ENCODE measurements at regions of chr15 and their contacts with region 1.

Region 1: DNA sequence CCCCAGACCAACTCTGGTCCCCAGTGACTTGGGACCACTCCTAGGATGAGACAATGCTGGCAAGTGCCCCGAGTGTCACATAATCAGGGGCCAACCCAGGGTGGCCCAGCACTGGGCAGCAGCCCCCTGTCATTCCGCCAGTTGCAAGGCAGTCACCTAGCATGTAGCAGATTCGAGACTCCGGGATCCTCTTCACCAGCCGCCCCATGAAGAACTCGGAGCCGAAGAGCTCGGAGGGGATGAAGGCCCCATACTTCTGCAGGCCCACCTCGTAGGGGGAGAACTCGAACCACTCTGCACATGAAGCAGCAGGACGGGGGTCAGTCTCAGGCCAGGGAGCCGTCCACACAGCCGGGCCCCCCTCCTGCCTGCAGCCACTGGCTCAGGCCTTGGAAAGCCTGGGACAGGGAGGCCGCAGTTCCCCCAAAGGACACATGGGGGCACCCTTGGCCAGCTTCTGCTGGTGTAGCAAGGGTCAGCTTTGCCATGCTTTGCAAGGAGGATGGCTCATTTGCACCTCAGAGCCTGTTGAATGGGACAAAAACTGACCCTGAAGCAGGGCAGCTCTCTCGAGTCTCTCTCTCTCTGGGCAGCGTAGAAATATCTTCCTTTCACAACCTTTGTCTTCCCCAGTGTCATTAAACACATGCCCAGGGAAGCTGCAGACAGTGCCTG is 17.0 kb upstream of the EHD4 start:
- DNase-seq: peak; percentile 34
- H3K4me3 ChIP-seq: no peak overlapping the region
- H3K27ac ChIP-seq: no peak overlapping the region
- H3K27me3 ChIP-seq: peaks cover 28% of the 10 kb centered on the region
- CTCF ChIP-seq: peak; percentile 97

Region 2: GRCh38 chr15:41713047-41713446 is 276.3 kb before region 1 on chr15:
- CTCF ChIA-PET with region 1: no interaction called
- POLR2A ChIA-PET with region 1: no interaction called
- DNase-seq: no peak
- H3K4me3 ChIP-seq: no peak overlapping the region
- H3K27ac ChIP-seq: no peak overlapping the region
- H3K27me3 ChIP-seq: no peaks in the 10 kb centered on the region
- CTCF ChIP-seq: no peak

Region 3: DNA sequence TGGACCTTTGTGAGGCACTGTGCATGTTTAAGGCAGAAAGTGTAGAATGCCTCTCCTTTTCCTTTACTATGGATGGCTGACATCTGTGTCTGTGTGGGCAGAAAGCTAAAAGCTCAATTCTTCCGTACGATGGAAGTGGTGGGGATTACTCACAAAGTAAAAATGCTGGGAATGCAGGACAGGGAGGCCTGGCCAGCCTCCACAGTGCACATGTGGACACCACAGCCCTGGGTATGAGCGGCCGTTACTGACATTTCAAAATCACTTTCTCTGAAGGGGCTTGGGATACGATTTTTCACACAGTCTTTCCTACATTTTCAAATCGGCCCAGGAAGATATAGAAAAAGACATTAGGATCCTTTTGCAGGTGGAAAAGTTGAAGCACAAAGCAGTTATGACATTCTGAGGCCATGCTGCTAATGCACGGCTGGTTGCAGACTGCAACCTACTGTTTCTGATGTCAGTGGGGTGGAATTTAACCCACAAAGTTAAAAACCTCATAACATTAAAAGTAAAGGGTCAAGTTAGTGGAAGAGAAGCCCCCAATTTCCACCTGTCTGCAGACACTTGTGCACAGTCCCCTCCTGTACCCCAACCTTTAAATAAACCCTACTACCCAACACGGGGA is 45.0 kb before region 1 on chr15:
- CTCF ChIA-PET with region 1: interaction called, 10 read pairs
- POLR2A ChIA-PET with region 1: no interaction called
- DNase-seq: peak; percentile 78
- H3K4me3 ChIP-seq: peak overlapping the region; percentile 23
- H3K27ac ChIP-seq: peak overlapping the region; percentile 99
- H3K27me3 ChIP-seq: no peaks in the 10 kb centered on the region
- CTCF ChIP-seq: no peak

Region 4: DNA sequence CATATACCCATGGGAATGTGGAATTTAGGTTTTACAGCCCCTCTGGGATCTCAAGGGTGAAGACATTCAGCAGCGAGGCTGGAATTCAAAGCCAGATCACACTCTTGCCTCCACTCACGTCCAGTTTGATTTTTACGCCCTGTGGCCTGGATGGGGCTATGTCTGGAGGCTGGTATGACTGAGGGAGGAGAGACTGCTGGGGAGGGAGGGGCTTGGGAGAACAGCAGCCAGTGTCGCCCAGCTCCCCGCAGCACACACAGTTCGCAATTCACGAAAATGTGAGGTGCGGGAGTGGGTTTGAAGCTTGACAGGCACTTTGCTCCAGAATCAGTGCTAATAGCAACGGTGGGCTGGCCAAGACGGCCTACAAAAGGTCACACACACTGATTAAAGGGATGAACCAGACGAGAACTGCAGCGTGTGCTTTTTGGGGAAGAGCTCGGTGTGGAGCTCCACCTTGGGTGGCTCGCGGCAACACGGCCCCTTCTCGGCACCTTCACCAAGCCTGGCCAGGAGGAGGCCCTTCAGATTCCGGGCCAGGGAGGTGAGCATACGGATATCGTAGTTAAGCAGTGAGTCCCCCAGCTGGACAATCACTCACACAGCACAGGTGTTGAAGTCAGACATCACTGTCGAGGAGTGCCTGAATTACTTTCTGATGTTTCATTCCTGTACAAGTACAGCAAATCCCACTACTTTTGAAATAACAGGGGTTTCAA is 33.4 kb before region 1 on chr15:
- CTCF ChIA-PET with region 1: no interaction called
- POLR2A ChIA-PET with region 1: no interaction called
- DNase-seq: no peak
- H3K4me3 ChIP-seq: no peak overlapping the region
- H3K27ac ChIP-seq: no peak overlapping the region
- H3K27me3 ChIP-seq: no peaks in the 10 kb centered on the region
- CTCF ChIP-seq: no peak

Region 5: DNA sequence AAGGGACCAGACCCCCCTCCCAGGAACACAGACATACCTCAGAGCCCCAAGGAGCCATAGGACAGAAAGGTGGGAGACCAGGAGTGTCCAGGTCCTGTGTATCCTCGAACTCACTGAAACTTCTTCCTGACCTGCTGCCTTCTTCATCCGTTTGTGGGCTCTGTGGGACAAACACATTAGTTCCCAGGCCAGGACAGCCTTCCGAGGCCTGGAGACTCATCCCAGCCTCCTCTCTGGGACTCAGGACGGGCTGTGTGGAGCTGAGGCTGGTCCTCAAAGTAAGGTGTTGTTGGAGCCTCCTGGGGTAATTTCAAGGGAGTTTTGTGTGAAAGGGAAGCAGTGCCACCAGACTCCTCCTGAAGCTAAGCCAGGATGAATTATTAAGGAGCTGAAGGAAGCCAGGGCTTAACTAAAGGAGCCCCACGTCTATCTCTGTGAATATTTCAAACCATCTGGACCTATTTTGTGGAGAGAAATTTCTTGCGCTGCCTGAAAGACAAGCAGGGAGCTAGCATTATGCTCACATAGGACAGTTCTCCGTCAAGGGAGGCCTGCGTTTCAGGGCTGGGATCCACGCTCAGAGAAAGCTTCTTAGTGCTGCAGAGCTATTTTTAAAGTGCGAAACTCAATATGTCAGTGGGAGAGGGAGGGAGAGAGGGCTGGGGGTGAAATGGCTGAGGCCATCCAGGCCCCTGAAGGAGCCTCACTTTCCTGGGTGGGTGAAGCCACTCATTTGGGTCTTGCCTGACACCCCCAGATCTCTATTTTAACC is 61.3 kb after region 1 on chr15:
- CTCF ChIA-PET with region 1: interaction called, 13 read pairs
- POLR2A ChIA-PET with region 1: no interaction called
- DNase-seq: no peak
- H3K4me3 ChIP-seq: no peak overlapping the region
- H3K27ac ChIP-seq: no peak overlapping the region
- H3K27me3 ChIP-seq: peaks cover 74% of the 10 kb centered on the region
- CTCF ChIP-seq: no peak

Region 6: GRCh38 chr15:42137431-42138261 is 148.2 kb after region 1 on chr15:
- CTCF ChIA-PET with region 1: interaction called, 36 read pairs
- POLR2A ChIA-PET with region 1: no interaction called
- DNase-seq: no peak
- H3K4me3 ChIP-seq: no peak overlapping the region
- H3K27ac ChIP-seq: no peak overlapping the region
- H3K27me3 ChIP-seq: peaks cover 32% of the 10 kb centered on the region
- CTCF ChIP-seq: peak; percentile 69

Region 7: DNA sequence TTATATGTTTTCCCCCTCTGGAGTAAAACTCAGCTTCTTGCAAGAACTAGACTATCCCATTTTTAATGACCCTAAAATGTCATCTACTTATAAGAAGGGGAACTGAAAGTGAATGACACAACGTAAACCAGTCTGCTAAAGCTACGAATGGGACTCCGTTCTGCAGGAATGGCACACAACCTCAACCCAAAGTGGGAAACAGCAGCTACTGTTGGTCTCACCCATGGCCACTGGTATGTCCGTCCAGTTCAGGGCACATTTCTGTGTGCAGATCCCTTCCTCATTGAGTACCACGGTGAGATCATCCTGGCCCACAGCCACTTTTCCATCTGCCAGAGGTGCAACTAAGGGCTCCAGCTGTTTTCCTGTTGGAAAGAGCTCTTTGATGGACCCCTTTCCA is 194.9 kb after region 1 on chr15:
- CTCF ChIA-PET with region 1: no interaction called
- POLR2A ChIA-PET with region 1: no interaction called
- DNase-seq: no peak
- H3K4me3 ChIP-seq: no peak overlapping the region
- H3K27ac ChIP-seq: no peak overlapping the region
- H3K27me3 ChIP-seq: no peaks in the 10 kb centered on the region
- CTCF ChIP-seq: no peak